CD4-positive, alpha-beta T cell (primary cell): ENCODE measurements at regions of chr16 and their contacts with region 1.

Region 1: GRCh38 chr16:50114373-50115069 is 38.6 kb upstream of the TENT4B start:
- DNase-seq: no peak
- ATAC-seq: no peak
- H3K4me3 ChIP-seq: no peak overlapping the region
- H3K4me3 Mint-ChIP-seq: no peak overlapping the region
- H3K27ac ChIP-seq: no peak overlapping the region
- H3K27ac Mint-ChIP-seq: no peak overlapping the region
- H3K4me1 ChIP-seq: no peaks in the 10 kb centered on the region
- H3K4me1 Mint-ChIP-seq: no peaks in the 10 kb centered on the region
- H3K27me3 ChIP-seq: no peaks in the 10 kb centered on the region
- H3K27me3 Mint-ChIP-seq: no peaks in the 10 kb centered on the region
- CTCF ChIP-seq: no peak

Region 2: DNA sequence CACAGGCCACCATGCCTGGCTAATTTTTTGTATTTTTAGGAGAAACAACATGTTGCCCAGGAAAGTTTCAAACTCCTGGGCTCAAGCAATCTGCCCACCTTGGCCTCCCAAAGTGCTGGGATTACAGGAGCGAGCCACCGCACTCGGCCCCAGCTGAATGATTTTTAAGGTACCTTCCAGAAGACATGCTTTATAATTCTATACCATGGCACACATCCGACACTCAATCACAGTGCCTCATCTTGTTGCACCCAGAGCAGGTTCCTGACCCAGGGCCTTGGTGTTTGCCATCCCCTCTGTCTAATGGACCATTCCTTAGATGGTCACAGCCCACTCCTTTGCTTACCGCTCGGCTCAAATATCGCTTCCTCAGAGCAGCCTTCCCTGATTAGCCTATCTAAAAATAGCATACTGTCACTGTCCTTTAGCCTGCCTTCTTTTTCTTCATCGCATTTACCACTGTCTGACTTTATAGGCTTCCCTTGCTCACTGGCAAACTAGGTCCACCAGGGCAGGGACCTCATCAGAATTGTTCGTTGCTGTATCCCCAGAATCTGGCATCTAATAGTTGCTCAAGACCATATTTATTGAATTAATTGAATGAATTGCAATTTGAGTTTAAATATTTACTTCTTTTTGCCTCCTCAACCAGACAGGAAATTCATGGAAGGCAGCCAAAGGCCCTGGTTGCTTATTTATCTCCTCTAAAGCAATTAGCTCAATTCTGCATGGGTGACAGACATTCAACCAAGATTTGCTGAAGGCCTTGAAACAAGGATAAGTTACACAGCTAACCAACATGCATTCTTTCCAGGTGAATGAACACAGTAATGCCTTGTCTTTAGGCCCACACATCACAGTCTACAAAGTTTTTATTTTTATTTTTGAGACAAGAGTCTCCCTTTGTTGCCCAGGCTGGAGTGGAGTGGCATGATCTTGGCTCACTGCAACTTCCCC is 32.2 kb after region 1 on chr16:
- CTCF ChIA-PET with region 1: no interaction called
- POLR2A ChIA-PET with region 1: no interaction called
- intact Hi-C with region 1: loop called in 1 of 2 experiments (anchors 5 kb)
- DNase-seq: no peak
- ATAC-seq: no peak
- H3K4me3 ChIP-seq: no peak overlapping the region
- H3K4me3 Mint-ChIP-seq: no peak overlapping the region
- H3K27ac ChIP-seq: no peak overlapping the region
- H3K27ac Mint-ChIP-seq: no peak overlapping the region
- H3K4me1 ChIP-seq: peaks cover 6% of the 10 kb centered on the region
- H3K4me1 Mint-ChIP-seq: peaks cover 2% of the 10 kb centered on the region
- H3K27me3 ChIP-seq: no peaks in the 10 kb centered on the region
- H3K27me3 Mint-ChIP-seq: no peaks in the 10 kb centered on the region
- CTCF ChIP-seq: no peak